ENCODE measurements at regions of chr17 and their contacts with region 1.

Region 1: GRCh38 chr17:69150333-69150732 is 8.6 kb upstream of the ABCA6 start:
- DNase-seq: no peak
- H3K4me3 ChIP-seq: no peak overlapping the region
- H3K27ac ChIP-seq: peak overlapping the region in 1 of 2 donors; percentile 36
- H3K4me1 ChIP-seq: peaks cover 4% of the 10 kb centered on the region
- H3K27me3 ChIP-seq: no peaks in the 10 kb centered on the region
- CTCF ChIP-seq: no peak
- EP300 ChIP-seq: no peak
- POLR2A ChIP-seq: no peak

Region 2: DNA sequence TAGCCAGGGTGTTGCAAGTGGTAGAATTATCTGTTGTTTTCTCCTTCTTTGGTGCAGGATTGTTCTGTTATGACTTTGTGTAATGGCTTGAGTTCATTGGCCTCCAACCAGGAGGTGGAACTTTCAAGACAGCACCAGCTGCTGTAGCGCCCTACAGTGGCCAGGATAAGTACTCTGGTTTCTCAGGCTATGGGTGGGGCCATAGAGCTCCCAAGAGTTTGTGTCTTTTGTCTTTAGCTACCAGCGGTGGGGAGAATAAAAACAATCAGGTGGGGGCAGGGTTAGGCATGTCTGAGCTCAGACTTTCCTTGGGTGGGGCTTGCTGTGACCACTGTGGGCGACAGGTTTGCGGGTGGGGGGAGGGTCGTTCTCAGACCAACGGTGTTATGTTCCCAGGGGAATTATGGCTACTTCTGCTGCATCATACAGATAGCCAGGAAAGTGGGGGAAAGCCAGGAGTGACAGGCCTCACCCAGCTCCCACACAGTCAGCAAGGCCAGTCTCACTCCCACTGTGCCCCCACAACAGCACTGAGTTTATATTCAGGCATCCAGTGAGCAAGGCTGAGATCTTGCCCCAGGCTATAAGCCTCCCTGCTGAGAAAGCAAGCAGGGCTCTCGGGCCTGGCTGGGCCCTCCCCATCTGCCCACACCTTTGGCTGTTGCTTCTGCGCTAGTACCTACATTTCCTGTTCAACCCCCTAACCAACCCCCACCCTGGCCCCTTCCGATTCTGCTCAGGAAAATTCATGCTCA is 62.9 kb after region 1 on chr17:
- intact Hi-C with region 1: loop called in 1 of 4 experiments (anchors 10 kb)
- DNase-seq: no peak
- H3K4me3 ChIP-seq: no peak overlapping the region
- H3K27ac ChIP-seq: no peak overlapping the region
- H3K4me1 ChIP-seq: no peaks in the 10 kb centered on the region
- H3K27me3 ChIP-seq: no peaks in the 10 kb centered on the region
- CTCF ChIP-seq: no peak
- EP300 ChIP-seq: no peak
- POLR2A ChIP-seq: no peak